ENCODE measurements at regions of chr5 and their contacts with region 1.

Region 1: GRCh38 chr5:15388866-15389265 is 111.1 kb upstream of the FBXL7 start:
- DNase-seq: no peak
- H3K4me3 ChIP-seq: no peak overlapping the region
- H3K27ac ChIP-seq: no peak overlapping the region
- H3K4me1 ChIP-seq: no peaks in the 10 kb centered on the region
- H3K27me3 ChIP-seq: no peaks in the 10 kb centered on the region
- CTCF ChIP-seq: no peak
- EP300 ChIP-seq: no peak
- POLR2A ChIP-seq: no peak

Region 2: GRCh38 chr5:15702102-15702501 is 313.2 kb after region 1 on chr5:
- intact Hi-C with region 1: no loop called
- DNase-seq: no peak
- H3K4me3 ChIP-seq: no peak overlapping the region
- H3K27ac ChIP-seq: no peak overlapping the region
- H3K4me1 ChIP-seq: peaks cover 0 to 39% (median 12%) of the 10 kb centered on the region in 4 donors
- H3K27me3 ChIP-seq: no peaks in the 10 kb centered on the region
- CTCF ChIP-seq: no peak
- EP300 ChIP-seq: no peak
- POLR2A ChIP-seq: no peak

Region 3: DNA sequence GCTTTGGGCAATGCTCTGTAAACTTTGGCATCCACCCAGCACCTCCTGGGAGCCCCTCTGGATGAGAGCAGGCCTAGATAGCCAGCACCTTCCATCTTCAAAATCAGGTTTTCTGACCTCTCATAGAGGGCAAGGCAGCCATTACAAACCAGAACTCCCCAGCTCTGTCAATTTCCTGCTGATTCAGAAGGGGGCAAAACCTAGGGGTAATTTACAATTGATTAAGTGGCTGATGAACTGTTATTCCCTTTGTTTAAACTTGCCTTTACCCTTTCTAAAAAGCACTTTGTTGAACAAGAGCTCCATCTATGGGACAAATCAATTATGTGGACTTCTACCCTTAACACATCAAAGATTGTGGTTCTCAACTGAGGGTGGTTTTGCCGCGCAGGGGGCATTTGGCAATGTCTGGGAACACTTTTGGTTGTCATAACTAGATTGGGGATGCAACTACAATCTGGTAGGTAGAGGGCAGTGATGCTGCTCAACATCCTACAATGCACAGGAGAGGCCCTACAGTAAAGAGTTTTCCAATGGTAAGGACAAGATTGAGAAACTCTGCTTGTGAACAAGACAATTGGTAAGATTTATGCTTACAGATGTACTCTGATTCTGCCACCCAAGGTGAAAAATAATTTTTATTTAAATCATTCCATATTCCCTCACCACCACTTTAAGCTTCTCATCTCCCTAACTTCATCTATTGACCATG is 606.6 kb after region 1 on chr5:
- intact Hi-C with region 1: loop called (anchors 5 kb)
- DNase-seq: no peak
- H3K4me3 ChIP-seq: no peak overlapping the region
- H3K27ac ChIP-seq: no peak overlapping the region
- H3K4me1 ChIP-seq: no peaks in the 10 kb centered on the region
- H3K27me3 ChIP-seq: no peaks in the 10 kb centered on the region
- CTCF ChIP-seq: peak in 1 of 4 experiments; percentile 46
- EP300 ChIP-seq: no peak
- POLR2A ChIP-seq: no peak